PC-3 (cell line): ENCODE measurements at regions of chr1 and their contacts with region 1.

Region 1: DNA sequence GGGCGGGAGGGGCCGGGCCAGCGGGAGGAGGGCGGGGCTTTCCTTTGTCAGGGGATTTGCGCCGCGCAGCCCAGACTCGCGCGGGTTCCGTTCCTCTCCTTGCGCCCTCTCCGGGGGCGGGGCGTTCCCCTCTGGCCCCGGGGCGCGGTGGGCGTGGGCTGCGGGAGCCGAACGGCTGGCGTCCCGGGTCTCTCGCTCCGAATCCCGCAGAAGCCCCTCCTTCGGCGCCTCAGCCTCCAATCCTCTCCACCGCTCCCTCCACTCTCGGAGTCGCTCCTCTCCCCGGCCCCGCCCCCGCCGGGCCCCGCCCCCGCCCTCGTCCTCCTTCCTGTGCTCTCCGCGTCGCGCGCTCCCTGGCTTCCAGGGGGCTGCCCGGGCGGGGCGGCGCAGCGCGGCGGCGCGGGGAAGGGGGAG is 82.8 kb upstream of the BMP8A start:
- DNase-seq: peak; percentile 96
- ATAC-seq: peak; percentile 77
- H3K4me3 ChIP-seq: peak overlapping the region; percentile 92
- H3K27ac ChIP-seq: peak overlapping the region; percentile 41; the same call in 1 of the 2 replicates
- H3K4me1 ChIP-seq: peaks cover 40% of the 10 kb centered on the region
- H3K27me3 ChIP-seq: no peaks in the 10 kb centered on the region
- CTCF ChIP-seq: no peak

Region 2: GRCh38 chr1:39091845-39092645 is 316.6 kb before region 1 on chr1:
- CTCF ChIA-PET with region 1: no interaction called
- POLR2A ChIA-PET with region 1: no interaction called
- intact Hi-C with region 1: no loop called
- DNase-seq: peak; percentile 64
- ATAC-seq: peak; percentile 76
- H3K4me3 ChIP-seq: no peak overlapping the region
- H3K27ac ChIP-seq: no peak overlapping the region
- H3K4me1 ChIP-seq: peaks cover 6% of the 10 kb centered on the region
- H3K27me3 ChIP-seq: no peaks in the 10 kb centered on the region
- CTCF ChIP-seq: peak; percentile 77

Region 3: GRCh38 chr1:39387452-39387851 is 21.2 kb before region 1 on chr1:
- CTCF ChIA-PET with region 1: interaction called, 15 read pairs
- POLR2A ChIA-PET with region 1: interaction called, 3 read pairs
- intact Hi-C with region 1: no loop called
- DNase-seq: peak; percentile 85
- ATAC-seq: peak; percentile 78
- H3K4me3 ChIP-seq: no peak overlapping the region
- H3K27ac ChIP-seq: peak overlapping the region; percentile 33
- H3K4me1 ChIP-seq: peaks cover 32% of the 10 kb centered on the region
- H3K27me3 ChIP-seq: no peaks in the 10 kb centered on the region
- CTCF ChIP-seq: peak; percentile 67

Region 4: DNA sequence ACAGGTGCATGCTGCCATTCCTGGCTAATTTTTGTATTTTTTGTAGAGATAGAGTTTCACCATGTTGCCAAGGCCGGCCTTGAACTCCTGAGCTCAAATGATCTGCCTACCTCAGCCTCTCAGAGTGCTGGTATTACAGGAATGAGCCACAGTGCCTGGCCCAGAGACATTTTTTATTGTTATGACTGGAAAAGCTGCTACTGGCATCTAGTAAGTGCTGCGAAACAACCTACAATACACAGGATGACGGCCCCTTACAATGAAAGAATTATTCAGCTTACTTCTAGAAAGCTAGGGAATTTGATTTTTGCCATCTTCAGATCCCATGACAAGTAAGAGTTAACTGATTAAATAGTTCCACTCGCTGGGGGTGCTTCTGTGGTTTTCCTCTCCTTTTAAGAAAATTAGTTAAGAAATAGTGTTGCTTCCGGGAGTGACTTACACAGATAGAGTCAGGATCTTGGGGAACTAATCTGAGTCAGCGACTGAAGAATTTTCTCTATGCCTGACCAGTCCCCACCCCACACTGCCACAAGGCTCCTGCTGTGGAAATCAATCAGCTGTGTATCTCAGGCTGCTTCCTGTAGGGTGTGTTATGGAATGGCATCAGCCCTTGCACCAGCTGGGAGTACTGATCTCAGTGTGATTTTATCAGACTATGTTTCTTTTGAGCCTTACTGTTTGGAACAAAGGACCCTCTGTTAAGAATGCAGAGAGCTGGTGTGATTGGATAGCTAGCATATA is 10.2 kb before region 1 on chr1:
- CTCF ChIA-PET with region 1: interaction called, 19 read pairs
- POLR2A ChIA-PET with region 1: interaction called, 4 read pairs
- intact Hi-C with region 1: loop called (anchors 1 kb)
- DNase-seq: peak; percentile 96
- ATAC-seq: peak; percentile 93
- H3K4me3 ChIP-seq: peak overlapping the region; percentile 5; the same call in 1 of the 2 replicates
- H3K27ac ChIP-seq: peak overlapping the region; percentile 75
- H3K4me1 ChIP-seq: peaks cover 53% of the 10 kb centered on the region
- H3K27me3 ChIP-seq: no peaks in the 10 kb centered on the region
- CTCF ChIP-seq: no peak